Activated naive CD4-positive, alpha-beta T cell treated with anti-CD3 and anti-CD28 coated beads, Interleukin-2, amount 10 ng/mL, durations not matched to agents 7 days and 5 days (primary cell): ENCODE measurements at regions of chr12 and their contacts with region 1.

Region 1: GRCh38 chr12:26853303-26854030 is 20.5 kb upstream of the ITPR2 start:
- DNase-seq: peak; percentile 83
- H3K4me3 Mint-ChIP-seq: no peak overlapping the region
- H3K27ac Mint-ChIP-seq: no peak overlapping the region
- H3K4me1 Mint-ChIP-seq: no peaks in the 10 kb centered on the region
- H3K27me3 Mint-ChIP-seq: no peaks in the 10 kb centered on the region

Region 2: GRCh38 chr12:26870491-26871419 is 17.3 kb after region 1 on chr12:
- CTCF ChIA-PET with region 1: interaction called, 15 read pairs
- DNase-seq: no peak
- H3K4me3 Mint-ChIP-seq: no peak overlapping the region
- H3K27ac Mint-ChIP-seq: no peak overlapping the region
- H3K4me1 Mint-ChIP-seq: peaks cover 20% of the 10 kb centered on the region
- H3K27me3 Mint-ChIP-seq: peaks cover 22% of the 10 kb centered on the region

Region 3: DNA sequence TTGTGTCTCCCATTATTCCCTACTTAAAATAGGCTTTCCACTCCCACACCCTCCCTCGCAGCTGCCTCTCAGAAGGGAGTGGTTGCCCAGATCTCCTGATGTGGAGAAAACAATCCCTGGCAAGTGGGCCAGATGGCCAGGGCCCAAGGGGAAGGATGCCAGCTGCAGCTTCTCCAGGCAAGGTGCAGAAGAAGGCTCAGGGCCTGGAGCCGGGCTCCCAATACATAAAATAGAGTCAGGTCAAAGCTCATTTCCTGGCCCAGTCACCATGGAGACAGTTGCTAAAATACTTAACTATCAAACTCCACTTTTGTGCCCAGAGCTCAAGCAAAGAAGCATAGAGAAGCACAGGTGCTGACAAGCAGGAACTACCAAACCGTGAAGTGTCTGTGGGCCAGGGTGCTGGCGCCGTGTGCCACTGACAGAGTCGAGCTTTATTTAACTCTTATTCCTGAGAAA is 25.2 kb after region 1 on chr12:
- CTCF ChIA-PET with region 1: interaction called, 44 read pairs
- DNase-seq: no peak
- H3K4me3 Mint-ChIP-seq: no peak overlapping the region
- H3K27ac Mint-ChIP-seq: no peak overlapping the region
- H3K4me1 Mint-ChIP-seq: peaks cover 2% of the 10 kb centered on the region
- H3K27me3 Mint-ChIP-seq: peaks cover 17% of the 10 kb centered on the region